ENCODE measurements at regions of chr14 and their contacts with region 1.

Region 1: GRCh38 chr14:59067127-59067894 is 121.2 kb upstream of the DAAM1 start:
- DNase-seq: no peak
- H3K4me3 ChIP-seq: no peak overlapping the region
- H3K4me3 Mint-ChIP-seq: no peak overlapping the region
- H3K27ac Mint-ChIP-seq: peak overlapping the region; percentile 10
- H3K4me1 ChIP-seq: peaks cover 43% of the 10 kb centered on the region
- H3K4me1 Mint-ChIP-seq: peaks cover 31% of the 10 kb centered on the region
- H3K27me3 ChIP-seq: no peaks in the 10 kb centered on the region
- H3K27me3 Mint-ChIP-seq: no peaks in the 10 kb centered on the region
- CTCF ChIP-seq: no peak

Region 2: GRCh38 chr14:59116984-59117415 is 49.7 kb after region 1 on chr14:
- CTCF ChIA-PET with region 1: no interaction called
- POLR2A ChIA-PET with region 1: no interaction called
- intact Hi-C with region 1: loop called (anchors 5 kb)
- DNase-seq: peak in 1 of 2 experiments; percentile 24
- H3K4me3 ChIP-seq: no peak overlapping the region
- H3K4me3 Mint-ChIP-seq: no peak overlapping the region
- H3K27ac Mint-ChIP-seq: no peak overlapping the region
- H3K4me1 ChIP-seq: peaks cover 17% of the 10 kb centered on the region; the same call in 1 of the 2 replicates
- H3K4me1 Mint-ChIP-seq: peaks cover 11% of the 10 kb centered on the region
- H3K27me3 ChIP-seq: no peaks in the 10 kb centered on the region
- H3K27me3 Mint-ChIP-seq: no peaks in the 10 kb centered on the region
- CTCF ChIP-seq: no peak